Mammary epithelial cell (primary cell): ENCODE measurements at regions of chr19 and their contacts with region 1.

Region 1: GRCh38 chr19:11125994-11126685 is 29.4 kb downstream of the SPC24 start:
- DNase-seq: no peak
- H3K4me3 ChIP-seq: no peak overlapping the region
- H3K27ac ChIP-seq: no peak overlapping the region
- H3K4me1 ChIP-seq: no peaks in the 10 kb centered on the region
- H3K27me3 ChIP-seq: no peaks in the 10 kb centered on the region
- CTCF ChIP-seq: peak; percentile 64 to 77

Region 2: DNA sequence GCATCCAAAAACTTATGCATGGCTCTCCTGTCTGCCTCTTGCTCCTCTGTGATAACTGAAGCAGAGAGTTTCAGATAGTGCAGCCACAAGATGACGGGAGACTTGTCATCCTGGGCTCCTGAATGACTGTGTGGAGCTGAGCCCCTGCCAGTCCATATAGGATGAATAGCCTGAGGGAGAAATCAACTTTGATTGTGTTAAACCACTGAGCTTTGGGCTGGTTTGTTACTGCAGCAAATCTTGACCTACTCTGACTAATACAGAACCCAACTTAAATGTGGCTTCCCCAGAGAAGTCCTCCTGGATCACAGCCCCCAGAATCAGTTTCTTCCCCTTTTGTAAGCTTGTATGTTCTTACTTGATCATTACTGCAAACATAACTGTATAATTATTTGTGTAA is 593.7 kb before region 1 on chr19:
- CTCF ChIA-PET with region 1: no interaction called
- dilution Hi-C with region 1: no loop called
- in situ Hi-C with region 1: no loop called
- intact Hi-C with region 1: no loop called
- DNase-seq: no peak
- H3K4me3 ChIP-seq: no peak overlapping the region
- H3K27ac ChIP-seq: no peak overlapping the region
- H3K4me1 ChIP-seq: peaks cover 17% of the 10 kb centered on the region
- H3K27me3 ChIP-seq: no peaks in the 10 kb centered on the region
- CTCF ChIP-seq: no peak

Region 3: DNA sequence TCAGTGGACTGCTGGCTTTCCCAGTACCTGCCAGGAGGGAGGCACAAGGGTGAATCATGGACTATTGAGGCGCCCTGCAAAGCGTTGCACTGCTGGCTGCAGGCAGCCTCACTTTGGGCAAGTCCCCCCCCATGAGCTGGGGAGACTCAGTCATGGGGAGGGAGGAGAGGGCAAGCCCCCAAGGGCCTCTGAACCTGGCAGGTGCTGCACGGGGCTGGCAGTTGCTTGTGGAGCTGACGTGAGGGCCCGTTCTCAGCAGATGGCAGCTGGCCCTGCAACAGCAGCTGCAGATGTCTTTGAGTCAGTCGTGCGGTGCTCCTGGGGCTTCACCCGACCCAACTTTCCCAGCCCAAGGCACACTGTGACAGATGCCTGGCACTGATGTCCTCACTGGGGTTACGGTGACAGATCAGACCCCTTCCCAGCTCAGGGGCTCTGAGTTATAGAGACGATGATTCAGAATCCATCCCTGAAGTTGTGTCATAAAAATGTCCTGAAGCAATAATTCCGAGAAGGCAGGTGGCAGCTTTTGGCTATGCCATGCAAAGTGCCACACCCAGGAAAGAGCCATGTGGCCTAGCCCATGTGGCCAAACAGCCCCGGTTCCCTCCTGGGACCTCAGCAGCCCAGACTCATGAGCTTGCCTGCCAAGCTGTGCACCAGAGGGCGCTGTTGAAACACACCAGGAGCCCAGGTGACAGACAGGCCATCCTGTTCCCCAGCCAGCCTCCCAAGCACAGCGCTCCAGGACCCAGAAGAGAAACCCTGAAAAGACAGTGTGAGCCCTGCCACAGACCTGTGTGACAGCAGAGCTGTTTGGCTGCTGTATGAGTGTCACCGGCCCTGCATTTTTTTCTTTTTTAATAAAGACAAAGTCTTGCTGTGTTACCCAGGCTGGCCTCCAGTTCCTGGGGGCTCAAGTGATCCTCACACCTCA is 90.4 kb before region 1 on chr19:
- CTCF ChIA-PET with region 1: no interaction called
- dilution Hi-C with region 1: no loop called
- in situ Hi-C with region 1: no loop called
- intact Hi-C with region 1: loop called (anchors 1 kb)
- DNase-seq: peak; percentile 80
- H3K4me3 ChIP-seq: no peak overlapping the region
- H3K27ac ChIP-seq: no peak overlapping the region
- H3K4me1 ChIP-seq: peaks cover 13% of the 10 kb centered on the region
- H3K27me3 ChIP-seq: no peaks in the 10 kb centered on the region
- CTCF ChIP-seq: peak; percentile 88 to 98

Region 4: GRCh38 chr19:11288343-11288742 is 162.2 kb after region 1 on chr19:
- CTCF ChIA-PET with region 1: no interaction called
- dilution Hi-C with region 1: no loop called
- in situ Hi-C with region 1: no loop called
- intact Hi-C with region 1: loop called (anchors 1 kb)
- DNase-seq: no peak
- H3K4me3 ChIP-seq: no peak overlapping the region
- H3K27ac ChIP-seq: no peak overlapping the region
- H3K4me1 ChIP-seq: peaks cover 1% of the 10 kb centered on the region
- H3K27me3 ChIP-seq: no peaks in the 10 kb centered on the region
- CTCF ChIP-seq: peak; percentile 40 to 55